ENCODE measurements at regions of chr1 and their contacts with region 1.

Region 1: GRCh38 chr1:52210044-52210443 is 68.2 kb downstream of the ZFYVE9 start:
- DNase-seq: no peak
- ATAC-seq: no peak
- H3K4me3 ChIP-seq: no peak overlapping the region
- H3K27ac ChIP-seq: no peak overlapping the region
- H3K4me1 ChIP-seq: no peaks in the 10 kb centered on the region
- H3K27me3 ChIP-seq: no peaks in the 10 kb centered on the region
- CTCF ChIP-seq: no peak
- POLR2A ChIP-seq: no peak
- RAD21 ChIP-seq: no peak

Region 2: GRCh38 chr1:52072291-52072690 is 137.8 kb before region 1 on chr1:
- CTCF ChIA-PET with region 1: no interaction called
- POLR2A ChIA-PET with region 1: no interaction called
- RAD21 ChIA-PET with region 1: no interaction called
- intact Hi-C with region 1: loop called (anchors 5 kb)
- DNase-seq: no peak
- ATAC-seq: no peak
- H3K4me3 ChIP-seq: no peak overlapping the region
- H3K27ac ChIP-seq: no peak overlapping the region
- H3K4me1 ChIP-seq: no peaks in the 10 kb centered on the region
- H3K27me3 ChIP-seq: no peaks in the 10 kb centered on the region
- CTCF ChIP-seq: no peak
- POLR2A ChIP-seq: no peak
- RAD21 ChIP-seq: no peak

Measured in HCT116 (cell line).